WTC11 (cell line): ENCODE measurements at regions of chr1 and their contacts with region 1.

Region 1: DNA sequence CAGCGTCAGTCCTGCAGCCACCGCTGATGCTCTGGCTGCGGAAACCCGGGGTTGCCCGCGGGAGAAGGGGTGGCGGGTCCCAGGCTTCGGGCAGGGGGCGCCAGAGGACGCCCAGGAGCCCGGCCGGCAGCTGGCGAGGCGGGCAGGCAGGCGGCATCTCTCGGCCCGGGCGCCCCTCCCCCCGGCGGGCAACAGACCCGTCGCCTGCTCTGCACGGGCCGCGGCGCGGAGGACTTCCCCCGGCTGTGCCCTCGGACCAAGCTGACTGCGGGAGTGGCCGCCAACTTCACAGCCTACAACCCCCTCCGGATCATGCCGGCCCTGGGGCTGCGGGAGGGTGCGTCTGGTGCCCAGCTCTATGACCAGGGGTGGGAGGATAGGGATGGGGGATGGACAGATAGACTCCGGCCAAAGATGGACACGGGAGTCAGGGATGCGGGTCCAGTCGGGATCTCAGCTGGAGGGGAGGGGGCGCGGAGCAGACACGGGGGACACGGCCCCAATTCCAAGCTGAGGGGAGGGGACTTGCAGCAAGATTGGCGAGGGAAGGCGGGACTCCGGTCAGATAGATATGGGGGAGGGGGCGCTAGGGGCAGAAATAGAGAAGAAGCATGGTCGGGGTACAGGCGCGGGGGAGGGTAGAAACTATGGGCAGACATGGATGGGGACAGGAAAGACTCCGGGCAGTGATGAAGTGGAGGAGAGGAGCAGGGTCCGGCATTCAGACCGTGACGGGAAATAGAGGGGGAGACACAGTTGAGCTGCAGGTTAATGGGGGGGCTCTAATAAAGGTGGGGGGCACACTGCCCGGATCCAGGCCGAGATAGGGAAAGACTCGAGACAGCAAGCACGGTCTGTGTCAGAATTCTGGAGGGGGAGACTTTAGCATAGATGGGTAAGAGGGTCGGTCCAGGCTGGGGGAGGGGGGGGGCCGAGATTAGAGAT is 1.1 kb downstream of the ADGRB2 start:
- DNase-seq: peak; percentile 88
- ATAC-seq: peak; percentile 36
- H3K4me3 Mint-ChIP-seq: peak overlapping the region; percentile 82
- H3K27ac Mint-ChIP-seq: no peak overlapping the region
- H3K4me1 Mint-ChIP-seq: peaks cover 63% of the 10 kb centered on the region
- H3K27me3 Mint-ChIP-seq: peaks cover 20% of the 10 kb centered on the region
- CTCF ChIP-seq: peak; percentile 82

Region 2: GRCh38 chr1:31505911-31506497 is 257.0 kb before region 1 on chr1:
- CTCF ChIA-PET with region 1: no interaction called
- POLR2A ChIA-PET with region 1: no interaction called
- DNase-seq: no peak
- ATAC-seq: no peak
- H3K4me3 Mint-ChIP-seq: no peak overlapping the region
- H3K27ac Mint-ChIP-seq: no peak overlapping the region
- H3K4me1 Mint-ChIP-seq: peaks cover 40% of the 10 kb centered on the region
- H3K27me3 Mint-ChIP-seq: peaks cover 4% of the 10 kb centered on the region; the same call in 1 of the 2 replicates
- CTCF ChIP-seq: no peak

Region 3: DNA sequence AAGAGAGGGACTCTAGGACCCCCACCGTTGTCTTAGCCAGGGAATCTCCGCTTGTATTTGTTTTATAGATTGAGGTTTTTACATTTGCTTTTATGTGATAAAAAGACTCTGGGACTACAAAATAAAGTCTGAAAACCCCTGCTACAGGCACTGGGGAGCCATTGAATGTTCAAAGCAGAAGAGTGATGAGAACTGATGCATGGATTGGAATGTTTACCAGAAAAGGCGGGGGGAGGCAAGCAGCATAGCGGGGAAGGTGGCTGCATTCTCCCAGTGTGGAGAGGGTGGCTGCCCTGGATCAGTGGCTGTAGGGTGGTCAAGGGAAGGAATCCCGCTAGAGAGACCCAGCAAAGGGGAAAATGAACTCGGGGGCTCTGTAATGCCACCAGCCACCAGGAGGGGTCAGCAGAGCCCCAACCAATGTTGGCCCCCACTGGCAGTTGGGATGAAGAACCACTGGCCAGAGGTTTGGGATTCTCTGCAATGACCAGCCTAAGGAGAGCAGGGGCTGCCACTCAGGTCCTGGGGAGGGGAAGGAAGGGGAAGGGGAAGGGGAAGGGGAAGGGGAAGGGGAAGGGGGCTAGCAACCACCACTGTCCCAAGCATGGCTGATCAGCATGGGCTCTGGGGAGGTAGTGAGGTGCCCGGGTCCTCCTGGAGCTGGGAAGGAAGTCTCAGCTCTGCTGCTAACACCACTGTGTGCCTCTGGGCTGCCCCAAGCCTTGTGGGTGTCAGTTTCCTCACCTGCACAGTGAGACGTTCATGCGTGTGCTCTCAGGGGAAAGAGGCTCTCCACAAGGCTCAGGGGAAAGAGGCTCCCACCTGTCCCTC is 99.2 kb before region 1 on chr1:
- CTCF ChIA-PET with region 1: interaction called, 10 read pairs
- POLR2A ChIA-PET with region 1: no interaction called
- DNase-seq: peak; percentile 89
- ATAC-seq: peak; percentile 83
- H3K4me3 Mint-ChIP-seq: no peak overlapping the region
- H3K27ac Mint-ChIP-seq: no peak overlapping the region
- H3K4me1 Mint-ChIP-seq: peaks cover 3% of the 10 kb centered on the region
- H3K27me3 Mint-ChIP-seq: no peaks in the 10 kb centered on the region
- CTCF ChIP-seq: peak; percentile 91

Region 4: DNA sequence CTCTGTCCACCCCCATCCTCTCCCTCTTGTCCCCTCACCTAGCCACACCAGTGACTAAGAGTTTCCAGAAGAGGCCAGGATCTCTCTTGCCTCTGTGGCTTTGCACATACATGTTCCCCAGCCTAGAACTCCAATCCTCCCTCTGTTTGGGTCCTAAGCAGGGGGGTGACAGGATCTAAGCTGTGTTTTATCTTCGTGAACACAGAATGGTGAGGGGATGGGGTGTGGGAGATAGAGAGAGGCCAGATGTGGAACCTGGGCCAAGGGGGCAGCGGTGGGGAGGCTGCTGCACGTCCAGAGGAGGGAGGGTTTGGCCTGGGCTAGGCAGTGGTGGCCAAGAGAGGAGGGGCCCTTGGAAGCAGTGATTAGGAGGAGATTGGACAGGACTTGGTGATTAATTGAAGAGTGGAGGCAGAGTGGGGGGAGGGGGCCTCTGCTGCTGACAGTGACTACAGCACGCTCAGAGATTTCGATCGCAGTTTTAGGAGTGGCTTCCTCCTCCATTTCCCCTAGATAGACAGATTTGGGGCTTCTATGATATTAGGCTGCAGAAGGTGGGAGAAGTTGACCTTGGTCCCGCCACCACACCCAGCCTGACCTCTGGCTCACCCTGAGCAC is 18.2 kb after region 1 on chr1:
- CTCF ChIA-PET with region 1: interaction called, 16 read pairs
- POLR2A ChIA-PET with region 1: no interaction called
- DNase-seq: no peak
- ATAC-seq: no peak
- H3K4me3 Mint-ChIP-seq: no peak overlapping the region
- H3K27ac Mint-ChIP-seq: no peak overlapping the region
- H3K4me1 Mint-ChIP-seq: peaks cover 38% of the 10 kb centered on the region
- H3K27me3 Mint-ChIP-seq: peaks cover 12% of the 10 kb centered on the region; the same call in 1 of the 2 replicates
- CTCF ChIP-seq: no peak

Region 5: DNA sequence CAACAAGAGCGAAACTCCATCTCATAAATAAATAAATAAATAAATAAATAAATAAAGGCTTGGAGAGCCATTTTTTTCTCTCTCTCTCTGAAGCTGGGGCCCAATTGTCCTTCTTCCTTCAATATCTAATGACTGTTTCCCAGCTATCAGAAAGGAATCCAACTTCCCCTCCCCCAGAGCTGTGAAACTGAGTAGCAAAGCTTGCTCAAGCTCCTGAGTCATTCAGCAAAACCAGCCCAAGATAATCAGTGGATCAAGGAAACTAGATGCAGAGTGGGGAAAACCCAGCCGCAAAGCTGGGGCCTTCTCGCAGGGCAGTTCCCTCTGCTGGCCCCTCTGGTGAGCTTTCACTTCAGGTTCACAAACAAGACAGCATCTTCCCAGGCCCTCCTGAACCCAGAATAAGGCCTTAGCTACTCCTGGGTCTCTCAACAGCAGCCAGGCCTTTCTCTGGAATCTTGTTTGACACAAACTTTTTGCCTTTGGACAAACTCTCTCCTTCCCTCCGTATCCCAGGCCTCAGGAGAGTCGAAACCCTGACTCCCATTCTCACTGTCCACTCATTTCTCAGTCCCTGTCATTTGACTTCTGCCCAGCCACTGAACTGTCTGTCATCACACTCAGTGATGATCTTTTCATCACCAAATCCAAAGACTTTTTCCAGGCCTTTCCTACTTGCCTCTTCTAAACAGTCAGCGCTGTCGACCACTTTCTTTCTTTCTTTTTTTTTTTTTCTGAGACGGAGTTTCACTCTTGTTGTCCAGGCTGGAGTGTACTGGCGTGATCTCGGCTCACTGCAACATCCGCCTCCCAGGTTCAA is 193.1 kb after region 1 on chr1:
- CTCF ChIA-PET with region 1: no interaction called
- POLR2A ChIA-PET with region 1: no interaction called
- DNase-seq: peak; percentile 40
- ATAC-seq: peak; percentile 19
- H3K4me3 Mint-ChIP-seq: no peak overlapping the region
- H3K27ac Mint-ChIP-seq: peak overlapping the region; percentile 92
- H3K4me1 Mint-ChIP-seq: peaks cover 40% of the 10 kb centered on the region
- H3K27me3 Mint-ChIP-seq: peaks cover 2% of the 10 kb centered on the region; the same call in 1 of the 2 replicates
- CTCF ChIP-seq: no peak